ENCODE measurements at regions of chr4 and their contacts with region 1.

Region 1: GRCh38 chr4:147530723-147531122 is 49.8 kb downstream of the EDNRA start:
- DNase-seq: no peak
- H3K4me3 ChIP-seq: no peak overlapping the region
- H3K27ac ChIP-seq: no peak overlapping the region
- H3K4me1 ChIP-seq: peaks cover 0 to 2% (median 0%) of the 10 kb centered on the region in 3 donors
- H3K27me3 ChIP-seq: no peaks in the 10 kb centered on the region
- CTCF ChIP-seq: no peak

Region 2: DNA sequence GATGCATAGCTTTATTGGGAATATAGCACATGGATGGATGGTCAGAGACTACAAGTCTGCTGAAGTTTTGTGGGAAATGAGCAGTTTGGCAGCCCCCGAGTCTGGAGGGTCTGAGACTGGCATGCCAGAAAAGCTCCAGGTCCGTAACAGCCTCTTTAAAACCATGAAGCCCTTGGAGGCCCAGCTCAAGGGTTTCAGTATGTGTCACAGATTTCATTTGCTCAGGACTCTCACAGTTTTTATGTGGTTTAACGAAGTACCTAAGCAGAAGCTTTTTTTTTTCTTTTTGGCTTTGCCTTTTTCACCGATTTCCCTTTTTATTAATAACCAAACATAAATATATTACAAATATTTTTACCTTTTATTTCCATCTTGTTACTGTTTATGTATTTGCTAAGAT is 55.9 kb after region 1 on chr4:
- intact Hi-C with region 1: loop called (anchors 10 kb)
- DNase-seq: no peak
- H3K4me3 ChIP-seq: no peak overlapping the region
- H3K27ac ChIP-seq: no peak overlapping the region
- H3K4me1 ChIP-seq: peaks cover 0 to 4% (median 0%) of the 10 kb centered on the region in 3 donors
- H3K27me3 ChIP-seq: no peaks in the 10 kb centered on the region
- CTCF ChIP-seq: no peak

Measured in kidney (tissue), 22 donors.